Vagina (tissue), 2 donors: ENCODE measurements at regions of chr12 and their contacts with region 1.

Region 1: GRCh38 chr12:95117178-95117599 is 43.8 kb upstream of the NR2C1 start:
- DNase-seq: no peak
- H3K4me3 ChIP-seq: no peak overlapping the region
- H3K27ac ChIP-seq: peak overlapping the region; percentile 44
- H3K4me1 ChIP-seq: peaks cover 19% of the 10 kb centered on the region
- H3K27me3 ChIP-seq: no peaks in the 10 kb centered on the region
- CTCF ChIP-seq: peak; percentile 81 to 90 (median 81)
- POLR2A ChIP-seq: no peak

Region 2: GRCh38 chr12:94195443-94195842 is 921.7 kb before region 1 on chr12:
- intact Hi-C with region 1: no loop called
- DNase-seq: no peak
- H3K4me3 ChIP-seq: no peak overlapping the region
- H3K27ac ChIP-seq: no peak overlapping the region
- H3K4me1 ChIP-seq: no peaks in the 10 kb centered on the region
- H3K27me3 ChIP-seq: no peaks in the 10 kb centered on the region
- CTCF ChIP-seq: no peak
- POLR2A ChIP-seq: no peak

Region 3: DNA sequence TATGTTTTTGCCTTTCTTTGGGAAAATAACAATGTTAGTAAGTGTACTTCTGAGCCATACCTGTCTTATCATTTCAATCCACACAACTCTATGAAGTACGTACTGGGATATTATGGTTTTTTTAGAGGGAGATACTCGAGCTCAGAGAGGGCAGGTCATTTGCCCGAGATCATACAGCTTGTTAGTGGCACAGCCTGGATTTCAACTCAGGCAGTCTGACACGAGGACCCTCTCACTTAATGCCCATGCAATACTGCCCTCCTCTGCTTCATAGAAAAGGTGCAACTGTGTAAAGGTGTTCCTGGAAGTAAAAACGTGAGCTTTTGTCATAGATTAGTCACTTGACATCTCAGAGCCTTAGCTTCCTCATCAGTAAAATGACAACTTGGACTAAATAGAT is 241.7 kb before region 1 on chr12:
- intact Hi-C with region 1: no loop called
- DNase-seq: no peak
- H3K4me3 ChIP-seq: no peak overlapping the region
- H3K27ac ChIP-seq: no peak overlapping the region
- H3K4me1 ChIP-seq: peaks cover 15% of the 10 kb centered on the region
- H3K27me3 ChIP-seq: no peaks in the 10 kb centered on the region
- CTCF ChIP-seq: no peak
- POLR2A ChIP-seq: no peak

Region 4: GRCh38 chr12:95336390-95337067 is 219.3 kb after region 1 on chr12:
- intact Hi-C with region 1: loop called (anchors 2 kb)
- DNase-seq: no peak
- H3K4me3 ChIP-seq: no peak overlapping the region
- H3K27ac ChIP-seq: peak overlapping the region; percentile 35
- H3K4me1 ChIP-seq: peaks cover 12% of the 10 kb centered on the region
- H3K27me3 ChIP-seq: no peaks in the 10 kb centered on the region
- CTCF ChIP-seq: peak; percentile 47 to 78 (median 54)
- POLR2A ChIP-seq: no peak